BJ (cell line): ENCODE measurements at regions of chr12 and their contacts with region 1.

Region 1: GRCh38 chr12:19967486-19967885 is 400.9 kb upstream of the PDE3A start:
- DNase-seq: peak; percentile 93
- H3K4me3 ChIP-seq: no peak overlapping the region
- H3K27me3 ChIP-seq: no peaks in the 10 kb centered on the region
- CTCF ChIP-seq: no peak

Region 2: GRCh38 chr12:20369305-20370005 is 402.0 kb after region 1 on chr12:
- CTCF ChIA-PET with region 1: no interaction called
- POLR2A ChIA-PET with region 1: interaction called, 12 read pairs
- DNase-seq: no peak
- H3K4me3 ChIP-seq: peak overlapping the region; percentile 48
- H3K27me3 ChIP-seq: no peaks in the 10 kb centered on the region
- CTCF ChIP-seq: peak; percentile 30; the same call in 1 of the 2 replicates